ENCODE measurements at regions of chr1 and their contacts with region 1.

Region 1: DNA sequence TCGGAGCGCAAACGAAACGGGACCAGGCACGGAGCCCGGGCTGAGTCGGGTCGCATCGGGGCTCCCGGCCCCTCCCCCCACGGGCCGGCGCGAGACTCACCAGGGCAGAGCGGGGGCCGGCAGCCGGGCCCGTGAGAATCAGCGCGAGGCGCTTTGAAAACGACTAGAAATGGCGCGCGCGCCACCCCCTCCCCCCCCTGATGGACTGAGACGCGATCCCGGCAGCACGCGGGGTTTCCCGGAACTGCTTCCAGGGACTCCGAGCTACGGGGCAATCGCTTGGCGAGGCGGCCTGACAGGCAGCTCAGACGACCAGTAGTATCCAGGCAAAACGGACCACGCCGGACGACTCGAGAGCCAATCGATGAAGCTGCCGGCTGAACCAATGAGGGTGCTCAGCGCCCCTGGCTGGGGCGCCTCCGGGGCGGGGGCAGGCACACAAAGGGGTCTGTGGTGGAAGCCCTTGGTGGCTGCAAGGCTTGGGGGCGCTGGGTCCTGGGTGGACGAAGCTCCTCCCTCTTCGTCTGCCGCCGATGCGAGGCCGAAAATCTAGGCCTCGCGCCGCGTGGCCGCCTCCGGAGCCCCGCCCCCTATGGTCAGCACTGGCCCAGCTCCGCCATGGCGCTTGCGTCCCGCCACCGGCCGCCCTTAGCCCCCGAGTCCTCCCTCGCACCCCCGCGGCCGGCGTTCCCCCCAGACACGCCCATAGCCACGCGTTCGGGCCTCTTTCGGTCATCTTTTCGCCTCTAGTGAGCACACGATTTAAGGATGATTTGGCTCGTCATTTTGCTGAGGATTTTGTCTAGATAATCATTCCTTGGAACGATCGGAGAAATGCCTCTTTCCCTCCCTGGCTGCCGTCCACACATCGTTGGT is at the start of gene HNRNPR:
- DNase-seq: peak; percentile 100
- H3K4me3 ChIP-seq: peak within 1 kb of the TSS; percentile 4 to 97 (median 68)
- H3K27ac ChIP-seq: peak within 1 kb of the TSS; percentile 83 to 99 (median 97)
- H3K4me1 ChIP-seq: peaks cover 29 to 43% of the 10 kb centered on the region in 2 donors
- H3K27me3 ChIP-seq: no peaks in the 10 kb centered on the region
- CTCF ChIP-seq: peak in 1 of 6 experiments; percentile 25
- POLR2A ChIP-seq: peak; percentile 51 to 90
- total RNA-seq, gene HNRNPR: 36.5 to 141 (median 96.3) TPM

Region 2: GRCh38 chr1:23394684-23395083 is 50.3 kb after region 1 on chr1:
- intact Hi-C with region 1: loop called in 1 of 2 experiments (anchors 5 kb)
- DNase-seq: peak in 6 of 7 donors; percentile 90 to 96 (median 94)
- H3K4me3 ChIP-seq: no peak overlapping the region
- H3K27ac ChIP-seq: peak overlapping the region; percentile 47 to 94 (median 84)
- H3K4me1 ChIP-seq: peaks cover 23 to 31% of the 10 kb centered on the region in 2 donors
- H3K27me3 ChIP-seq: no peaks in the 10 kb centered on the region
- CTCF ChIP-seq: peak in 2 of 6 experiments; percentile 6 to 12
- POLR2A ChIP-seq: peak in 1 of 2 donors; percentile 55

Region 3: GRCh38 chr1:23484253-23485001 is 140.1 kb after region 1 on chr1:
- intact Hi-C with region 1: loop called in 1 of 2 experiments (anchors 10 kb)
- DNase-seq: peak; percentile 94 to 97 (median 95)
- H3K4me3 ChIP-seq: peak overlapping the region in 2 of 4 donors; percentile 44 to 84
- H3K27ac ChIP-seq: peak overlapping the region in 4 of 5 donors; percentile 76 to 95 (median 84)
- H3K4me1 ChIP-seq: peaks cover 15 to 28% of the 10 kb centered on the region in 2 donors
- H3K27me3 ChIP-seq: no peaks in the 10 kb centered on the region
- CTCF ChIP-seq: no peak
- POLR2A ChIP-seq: peak in 1 of 2 donors; percentile 44